HCT116 (cell line): ENCODE measurements at regions of chr13 and their contacts with region 1.

Region 1: GRCh38 chr13:103540382-103540765 is 474.2 kb upstream of the SLC10A2 start:
- DNase-seq: no peak
- ATAC-seq: no peak
- H3K4me3 ChIP-seq: no peak overlapping the region
- H3K27ac ChIP-seq: no peak overlapping the region
- H3K4me1 ChIP-seq: no peaks in the 10 kb centered on the region
- H3K27me3 ChIP-seq: no peaks in the 10 kb centered on the region
- CTCF ChIP-seq: no peak
- POLR2A ChIP-seq: no peak
- RAD21 ChIP-seq: no peak

Region 2: DNA sequence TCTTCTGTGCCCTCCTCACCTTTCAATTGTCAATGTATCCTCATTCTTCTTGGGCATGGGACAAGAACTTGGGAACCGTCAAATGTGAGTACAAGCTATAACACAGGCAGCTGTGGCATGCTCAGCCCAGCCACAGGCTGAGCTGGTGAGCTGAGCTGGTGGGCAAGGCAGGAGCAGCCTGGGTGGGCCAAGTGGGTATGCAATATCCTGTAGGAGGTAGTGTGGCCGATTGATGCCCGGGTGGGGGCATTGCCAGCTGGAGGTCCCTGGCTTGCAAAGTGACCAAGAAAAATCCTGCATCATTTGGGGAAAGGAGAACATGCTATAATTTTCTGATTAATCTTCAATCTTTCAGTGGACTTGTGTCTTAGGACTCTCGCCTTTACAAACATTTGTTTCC is 33.1 kb after region 1 on chr13:
- CTCF ChIA-PET with region 1: no interaction called
- POLR2A ChIA-PET with region 1: no interaction called
- RAD21 ChIA-PET with region 1: no interaction called
- intact Hi-C with region 1: loop called (anchors 5 kb)
- DNase-seq: no peak
- ATAC-seq: no peak
- H3K4me3 ChIP-seq: no peak overlapping the region
- H3K27ac ChIP-seq: no peak overlapping the region
- H3K4me1 ChIP-seq: no peaks in the 10 kb centered on the region
- H3K27me3 ChIP-seq: no peaks in the 10 kb centered on the region
- CTCF ChIP-seq: no peak
- POLR2A ChIP-seq: no peak
- RAD21 ChIP-seq: no peak

Region 3: GRCh38 chr13:103615771-103616170 is 75.4 kb after region 1 on chr13:
- CTCF ChIA-PET with region 1: no interaction called
- POLR2A ChIA-PET with region 1: no interaction called
- RAD21 ChIA-PET with region 1: no interaction called
- intact Hi-C with region 1: no loop called
- DNase-seq: no peak
- ATAC-seq: no peak
- H3K4me3 ChIP-seq: no peak overlapping the region
- H3K27ac ChIP-seq: no peak overlapping the region
- H3K4me1 ChIP-seq: no peaks in the 10 kb centered on the region
- H3K27me3 ChIP-seq: no peaks in the 10 kb centered on the region
- CTCF ChIP-seq: no peak
- POLR2A ChIP-seq: no peak
- RAD21 ChIP-seq: no peak